ENCODE measurements at regions of chr1 and their contacts with region 1.

Region 1: DNA sequence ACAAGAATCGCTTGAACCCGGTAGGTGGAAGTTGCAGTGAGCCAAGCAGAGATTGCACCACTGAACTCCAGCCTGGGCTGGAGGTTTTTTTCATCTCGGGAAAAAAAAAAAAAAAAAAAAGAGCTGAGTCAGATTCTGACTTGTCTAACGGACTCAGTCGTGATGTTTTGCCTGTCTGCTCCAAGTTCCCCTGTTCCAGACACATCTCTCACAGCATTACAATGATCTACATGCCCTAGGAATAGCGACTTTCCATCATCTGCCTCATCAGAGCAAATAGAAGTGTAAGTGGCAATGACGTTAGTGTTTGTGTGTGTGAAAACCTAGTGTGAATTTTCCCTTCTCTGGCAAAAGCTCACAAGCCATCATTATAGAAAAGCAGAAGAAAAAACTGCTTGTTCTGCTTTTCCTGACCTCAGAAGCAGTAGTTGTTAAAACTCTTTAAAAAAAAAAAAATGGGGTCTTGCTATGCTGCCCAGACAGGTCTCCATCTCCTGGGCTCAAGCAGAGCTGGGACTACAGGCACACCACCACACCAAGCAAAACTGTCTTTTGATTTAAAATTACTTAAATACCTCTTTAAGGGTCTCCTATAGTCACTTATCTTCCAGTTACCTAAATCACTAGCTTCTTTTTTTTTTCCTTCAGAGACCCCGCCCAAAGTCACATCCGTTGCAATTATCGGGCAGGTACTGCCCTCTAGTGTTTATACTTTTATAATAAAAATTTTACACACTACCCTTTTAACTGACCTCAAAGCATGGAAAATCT is 37.3 kb downstream of the PLEKHO1 start:
- DNase-seq: peak; percentile 66
- H3K4me3 ChIP-seq: no peak overlapping the region
- H3K27ac ChIP-seq: peak overlapping the region in 1 of 2 experiments; percentile 42; a peak in 2 of 4 replicates
- H3K4me1 ChIP-seq: peaks cover 0 to 2% of the 10 kb centered on the region in 2 experiments; a peak in 1 of 4 replicates
- H3K27me3 ChIP-seq: no peaks in the 10 kb centered on the region
- CTCF ChIP-seq: peak; percentile 76
- EP300 ChIP-seq: no peak
- RAD21 ChIP-seq: peak; percentile 76

Region 2: GRCh38 chr1:149942207-149942606 is 244.8 kb before region 1 on chr1:
- CTCF ChIA-PET with region 1: interaction called, 10 read pairs
- POLR2A ChIA-PET with region 1: no interaction called
- DNase-seq: peak; percentile 82
- H3K4me3 ChIP-seq: no peak overlapping the region
- H3K27ac ChIP-seq: peak overlapping the region; percentile 4 to 53; a peak in 3 of 4 replicates
- H3K4me1 ChIP-seq: peaks cover 19 to 25% of the 10 kb centered on the region in 2 experiments
- H3K27me3 ChIP-seq: no peaks in the 10 kb centered on the region
- CTCF ChIP-seq: peak; percentile 43
- EP300 ChIP-seq: no peak
- RAD21 ChIP-seq: peak; percentile 63

Region 3: GRCh38 chr1:150072959-150073358 is 114.0 kb before region 1 on chr1:
- CTCF ChIA-PET with region 1: interaction called, 22 read pairs
- POLR2A ChIA-PET with region 1: interaction called, 3 read pairs
- DNase-seq: peak; percentile 26
- H3K4me3 ChIP-seq: no peak overlapping the region
- H3K27ac ChIP-seq: no peak overlapping the region; a peak in 1 of 4 replicates
- H3K4me1 ChIP-seq: peaks cover 0 to 8% of the 10 kb centered on the region in 2 experiments; a peak in 2 of 4 replicates
- H3K27me3 ChIP-seq: no peaks in the 10 kb centered on the region
- CTCF ChIP-seq: peak; percentile 71
- EP300 ChIP-seq: no peak
- RAD21 ChIP-seq: peak; percentile 54

Region 4: GRCh38 chr1:150162862-150163706 is 23.9 kb before region 1 on chr1:
- CTCF ChIA-PET with region 1: interaction called, 29 read pairs
- POLR2A ChIA-PET with region 1: interaction called, 4 read pairs
- DNase-seq: peak; percentile 71
- H3K4me3 ChIP-seq: peak overlapping the region in 1 of 2 experiments; percentile 18; a peak in 1 of 4 replicates
- H3K27ac ChIP-seq: peak overlapping the region; percentile 94 to 95
- H3K4me1 ChIP-seq: peaks cover 31 to 43% of the 10 kb centered on the region in 2 experiments
- H3K27me3 ChIP-seq: no peaks in the 10 kb centered on the region
- CTCF ChIP-seq: no peak; the same call in 1 of the 2 replicates
- EP300 ChIP-seq: peak in 1 of 2 experiments; percentile 60; a peak in 1 of 4 replicates
- RAD21 ChIP-seq: no peak

Region 5: DNA sequence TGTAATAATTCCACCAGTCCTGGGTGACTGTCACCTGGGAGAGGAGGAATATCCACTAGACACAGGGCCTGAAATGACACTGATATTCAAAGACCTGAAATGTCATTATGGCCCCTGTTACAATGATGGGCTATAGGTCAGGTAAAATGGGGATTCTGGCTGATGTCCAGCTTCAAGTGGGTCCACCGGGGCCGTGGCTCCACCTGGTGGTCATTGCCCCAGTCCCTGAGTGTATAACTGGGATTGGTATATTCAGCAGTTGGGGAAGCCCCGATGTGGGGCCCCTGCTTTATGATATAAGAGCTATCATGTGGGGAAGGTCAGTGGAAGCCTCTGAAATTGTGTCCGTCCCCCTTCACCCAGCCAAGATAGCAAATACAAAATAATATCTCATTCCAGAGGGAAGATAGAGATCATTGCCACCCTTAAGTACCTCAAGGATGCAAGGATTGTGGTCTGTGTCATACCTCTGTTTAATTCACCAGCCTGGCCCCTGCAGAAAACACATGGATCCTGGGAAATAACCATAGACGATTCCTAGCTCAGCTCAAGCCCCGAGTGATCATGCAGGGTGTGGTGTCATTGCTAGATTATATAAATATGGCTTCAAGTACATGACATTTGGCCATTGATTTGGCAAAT is 17.9 kb before region 1 on chr1:
- CTCF ChIA-PET with region 1: interaction called, 63 read pairs
- POLR2A ChIA-PET with region 1: interaction called, 4 read pairs
- DNase-seq: peak; percentile 84
- H3K4me3 ChIP-seq: no peak overlapping the region; a peak in 1 of 4 replicates
- H3K27ac ChIP-seq: no peak overlapping the region
- H3K4me1 ChIP-seq: peaks cover 0 to 3% of the 10 kb centered on the region in 2 experiments; a peak in 2 of 4 replicates
- H3K27me3 ChIP-seq: no peaks in the 10 kb centered on the region
- CTCF ChIP-seq: peak; percentile 93
- EP300 ChIP-seq: no peak
- RAD21 ChIP-seq: peak; percentile 90

Region 6: GRCh38 chr1:150176593-150176992 is 10.4 kb before region 1 on chr1:
- CTCF ChIA-PET with region 1: interaction called, 63 read pairs
- POLR2A ChIA-PET with region 1: no interaction called
- DNase-seq: no peak
- H3K4me3 ChIP-seq: no peak overlapping the region
- H3K27ac ChIP-seq: no peak overlapping the region
- H3K4me1 ChIP-seq: no peaks in the 10 kb centered on the region
- H3K27me3 ChIP-seq: no peaks in the 10 kb centered on the region
- CTCF ChIP-seq: no peak
- EP300 ChIP-seq: no peak
- RAD21 ChIP-seq: no peak

Region 7: DNA sequence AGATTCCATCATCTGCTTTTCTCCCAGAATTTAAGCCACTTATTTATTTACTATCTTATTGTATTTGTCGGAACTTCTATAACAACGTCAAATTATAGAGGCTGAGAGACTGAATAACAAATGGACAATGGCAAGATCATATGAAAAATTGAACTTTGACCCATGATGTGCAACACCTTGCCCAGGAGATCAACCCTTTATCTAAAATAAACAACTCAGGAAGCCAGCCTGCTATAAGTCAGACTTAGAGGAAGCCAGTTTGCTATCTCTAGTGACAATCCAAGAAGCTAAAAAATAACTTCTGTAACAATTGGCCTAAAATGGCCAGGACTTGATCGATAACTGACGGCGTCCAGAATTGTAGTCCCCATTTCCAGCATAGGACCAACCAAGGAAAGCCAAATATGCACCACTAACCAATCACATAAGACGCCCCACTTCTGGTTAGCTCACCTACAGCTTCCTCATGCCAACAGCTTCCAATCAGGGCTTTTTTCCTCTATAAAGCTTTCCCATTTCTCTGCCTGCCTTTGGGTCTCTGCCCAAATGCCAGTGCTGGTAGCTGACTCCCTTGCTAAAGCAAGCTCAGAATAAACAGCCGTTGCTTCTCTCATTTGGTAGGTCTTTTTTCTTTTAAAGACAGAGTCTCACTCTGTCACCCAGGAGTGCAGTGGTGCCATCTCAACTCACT is 20.5 kb after region 1 on chr1:
- CTCF ChIA-PET with region 1: interaction called, 12 read pairs
- POLR2A ChIA-PET with region 1: no interaction called
- DNase-seq: no peak
- H3K4me3 ChIP-seq: no peak overlapping the region
- H3K27ac ChIP-seq: no peak overlapping the region
- H3K4me1 ChIP-seq: no peaks in the 10 kb centered on the region
- H3K27me3 ChIP-seq: no peaks in the 10 kb centered on the region
- CTCF ChIP-seq: no peak
- EP300 ChIP-seq: no peak
- RAD21 ChIP-seq: no peak

Region 8: GRCh38 chr1:150268705-150269403 is 81.9 kb after region 1 on chr1 and contains the start of gene APH1A:
- CTCF ChIA-PET with region 1: no interaction called
- POLR2A ChIA-PET with region 1: no interaction called
- DNase-seq: peak; percentile 98
- H3K4me3 ChIP-seq: peak within 1 kb of the TSS; percentile 90 to 93
- H3K27ac ChIP-seq: peak within 1 kb of the TSS; percentile 70 to 87
- H3K4me1 ChIP-seq: peaks cover 7 to 13% of the 10 kb centered on the region in 2 experiments; a peak in 2 of 4 replicates
- H3K27me3 ChIP-seq: no peaks in the 10 kb centered on the region
- CTCF ChIP-seq: no peak
- EP300 ChIP-seq: peak in 1 of 2 experiments; percentile 24; a peak in 2 of 4 replicates
- RAD21 ChIP-seq: no peak
- polyA plus RNA-seq, gene APH1A: 175 and 232 TPM in 2 replicates